ENCODE measurements at regions of chr1 and their contacts with region 1.

Region 1: GRCh38 chr1:172380441-172381244 is 39.8 kb upstream of the C1orf105 start:
- DNase-seq: no peak
- ATAC-seq: peak; percentile 98
- H3K4me3 ChIP-seq: peak overlapping the region; percentile 4; the same call in 1 of the 2 replicates
- H3K27ac ChIP-seq: peak overlapping the region; percentile 93
- H3K4me1 ChIP-seq: peaks cover 20% of the 10 kb centered on the region
- H3K27me3 ChIP-seq: no peaks in the 10 kb centered on the region
- CTCF ChIP-seq: peak in 1 of 3 experiments; percentile 19; a peak in 1 of 6 replicates
- EP300 ChIP-seq: peak; percentile 16 to 83; a peak in 3 of 4 replicates
- POLR2A ChIP-seq: no peak
- RAD21 ChIP-seq: peak; percentile 27; the same call in 1 of the 2 replicates

Region 2: DNA sequence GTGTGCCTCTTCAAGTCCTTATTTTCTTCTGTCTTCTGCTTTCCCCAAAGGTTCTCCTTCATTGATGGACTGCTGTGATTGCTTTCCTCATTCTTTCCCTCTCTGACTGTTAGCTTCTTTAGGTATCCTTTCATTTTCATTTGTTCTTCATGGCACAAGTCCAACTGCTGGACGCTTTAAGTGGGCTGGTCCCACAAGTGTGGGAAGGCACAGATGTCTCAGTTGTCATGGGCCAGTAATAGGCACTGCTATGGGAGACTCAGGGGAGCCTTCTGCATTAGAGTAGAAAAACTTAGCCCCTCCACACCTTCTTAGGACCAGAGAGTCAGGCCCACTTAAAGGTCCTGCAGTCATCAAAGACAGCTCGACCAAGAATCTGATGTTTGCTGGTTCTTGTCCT is 82.5 kb before region 1 on chr1:
- CTCF ChIA-PET with region 1: no interaction called
- POLR2A ChIA-PET with region 1: no interaction called
- RAD21 ChIA-PET with region 1: no interaction called
- SMC1A ChIA-PET with region 1: no interaction called
- in situ Hi-C with region 1: no loop called
- intact Hi-C with region 1: no loop called
- DNase-seq: peak; percentile 31
- ATAC-seq: peak; percentile 66
- H3K4me3 ChIP-seq: no peak overlapping the region
- H3K27ac ChIP-seq: no peak overlapping the region
- H3K4me1 ChIP-seq: no peaks in the 10 kb centered on the region
- H3K27me3 ChIP-seq: no peaks in the 10 kb centered on the region
- CTCF ChIP-seq: no peak
- EP300 ChIP-seq: no peak
- POLR2A ChIP-seq: no peak
- RAD21 ChIP-seq: no peak

Region 3: DNA sequence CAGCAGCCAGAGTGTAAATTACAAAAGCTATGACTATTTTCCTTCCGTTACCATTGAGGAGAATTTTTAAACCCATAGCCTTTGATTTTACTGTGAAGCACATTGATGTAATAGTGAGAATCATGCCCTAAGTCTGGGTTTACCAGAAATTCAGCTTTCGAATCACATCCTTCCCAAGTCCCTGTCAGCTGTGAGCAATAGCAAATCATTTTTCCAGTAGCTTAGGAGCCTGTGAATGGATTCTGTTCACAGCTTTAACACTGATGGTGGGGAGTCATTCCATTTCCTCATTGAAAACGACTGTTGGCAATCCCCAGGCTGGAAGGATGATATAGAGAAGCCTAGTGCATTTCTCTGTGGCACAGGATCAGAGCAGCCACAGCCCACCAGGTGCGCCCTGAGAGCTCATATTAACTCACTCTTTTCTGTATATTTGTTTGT is 42.3 kb before region 1 on chr1:
- CTCF ChIA-PET with region 1: interaction called, 32 read pairs
- POLR2A ChIA-PET with region 1: interaction called, 9 read pairs
- RAD21 ChIA-PET with region 1: interaction called, 52 read pairs
- SMC1A ChIA-PET with region 1: interaction called, 222 read pairs
- in situ Hi-C with region 1: no loop called
- intact Hi-C with region 1: loop called (anchors 1 kb)
- DNase-seq: peak; percentile 74
- ATAC-seq: peak; percentile 74
- H3K4me3 ChIP-seq: peak overlapping the region; percentile 28; the same call in 1 of the 2 replicates
- H3K27ac ChIP-seq: peak overlapping the region; percentile 98
- H3K4me1 ChIP-seq: peaks cover 44% of the 10 kb centered on the region
- H3K27me3 ChIP-seq: no peaks in the 10 kb centered on the region
- CTCF ChIP-seq: no peak
- EP300 ChIP-seq: peak in 1 of 2 experiments; percentile 34; a peak in 1 of 4 replicates
- POLR2A ChIP-seq: no peak
- RAD21 ChIP-seq: no peak

Region 4: GRCh38 chr1:172343240-172344160 is 37.1 kb before region 1 on chr1:
- CTCF ChIA-PET with region 1: interaction called, 32 read pairs
- POLR2A ChIA-PET with region 1: interaction called, 9 read pairs
- RAD21 ChIA-PET with region 1: interaction called, 52 read pairs
- SMC1A ChIA-PET with region 1: interaction called, 222 read pairs
- in situ Hi-C with region 1: no loop called
- intact Hi-C with region 1: loop called (anchors 1 kb)
- DNase-seq: no peak
- ATAC-seq: peak; percentile 37
- H3K4me3 ChIP-seq: no peak overlapping the region
- H3K27ac ChIP-seq: peak overlapping the region; percentile 98
- H3K4me1 ChIP-seq: peaks cover 58% of the 10 kb centered on the region
- H3K27me3 ChIP-seq: no peaks in the 10 kb centered on the region
- CTCF ChIP-seq: no peak
- EP300 ChIP-seq: peak in 1 of 2 experiments; percentile 13; a peak in 1 of 4 replicates
- POLR2A ChIP-seq: no peak
- RAD21 ChIP-seq: no peak

Region 5: GRCh38 chr1:172351761-172352161 is 28.9 kb before region 1 on chr1:
- CTCF ChIA-PET with region 1: interaction called, 3 read pairs
- POLR2A ChIA-PET with region 1: interaction called, 10 read pairs
- RAD21 ChIA-PET with region 1: interaction called, 10 read pairs
- SMC1A ChIA-PET with region 1: interaction called, 336 read pairs
- in situ Hi-C with region 1: no loop called
- intact Hi-C with region 1: no loop called
- DNase-seq: no peak
- ATAC-seq: no peak
- H3K4me3 ChIP-seq: no peak overlapping the region
- H3K27ac ChIP-seq: no peak overlapping the region
- H3K4me1 ChIP-seq: peaks cover 4% of the 10 kb centered on the region
- H3K27me3 ChIP-seq: no peaks in the 10 kb centered on the region
- CTCF ChIP-seq: no peak
- EP300 ChIP-seq: no peak
- POLR2A ChIP-seq: no peak
- RAD21 ChIP-seq: no peak

Region 6: DNA sequence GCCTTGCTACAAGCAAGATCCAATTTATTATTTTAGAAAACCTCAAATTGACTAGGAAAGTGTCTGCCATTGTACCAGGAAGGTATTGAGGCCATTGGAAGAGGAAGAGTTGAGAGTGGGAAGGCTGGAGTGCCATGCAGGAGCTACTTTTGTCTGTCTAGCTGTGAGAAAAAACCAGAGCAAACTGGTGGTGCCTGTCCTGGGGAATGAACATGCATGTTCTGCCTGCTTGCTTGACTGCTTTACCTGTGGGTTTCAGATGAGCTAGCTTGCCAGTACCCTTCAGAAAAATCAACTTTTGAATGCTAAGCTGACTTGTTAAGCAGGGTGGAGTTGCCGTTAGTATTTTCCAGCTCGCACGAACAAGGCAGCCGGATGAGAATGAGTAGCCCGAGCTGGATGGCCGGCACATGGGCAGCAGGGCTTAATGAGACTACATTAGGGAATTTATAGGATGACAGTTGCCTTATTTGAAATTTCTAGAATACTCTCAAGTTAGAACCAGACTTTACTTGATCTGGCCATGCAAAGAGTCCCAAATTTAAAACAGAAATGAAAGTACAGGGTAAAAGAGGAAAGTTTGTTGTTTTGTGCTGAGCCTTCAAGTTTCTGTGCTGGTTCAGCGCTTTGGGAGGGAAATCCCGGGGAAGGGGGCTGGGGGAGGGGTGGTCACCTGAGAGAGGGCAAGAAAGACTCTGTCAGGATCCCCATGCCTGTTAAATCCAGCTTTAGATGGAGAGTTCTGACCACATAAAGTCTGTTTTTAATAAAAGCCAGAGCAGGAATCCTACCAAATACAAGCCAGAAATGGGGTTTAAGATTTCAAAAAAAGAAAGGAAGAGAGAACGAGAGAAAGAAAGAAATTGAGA is 10.3 kb after region 1 on chr1:
- CTCF ChIA-PET with region 1: interaction called, 16 read pairs
- POLR2A ChIA-PET with region 1: interaction called, 41 read pairs
- RAD21 ChIA-PET with region 1: interaction called, 57 read pairs
- SMC1A ChIA-PET with region 1: interaction called, 345 read pairs
- in situ Hi-C with region 1: no loop called
- intact Hi-C with region 1: loop called (anchors 1 kb)
- DNase-seq: peak; percentile 96
- ATAC-seq: peak; percentile 82
- H3K4me3 ChIP-seq: peak overlapping the region; percentile 11; the same call in 1 of the 2 replicates
- H3K27ac ChIP-seq: peak overlapping the region; percentile 98
- H3K4me1 ChIP-seq: peaks cover 56% of the 10 kb centered on the region
- H3K27me3 ChIP-seq: no peaks in the 10 kb centered on the region
- CTCF ChIP-seq: no peak
- EP300 ChIP-seq: no peak
- POLR2A ChIP-seq: peak; percentile 32; the same call in 1 of the 2 replicates
- RAD21 ChIP-seq: peak; percentile 34; the same call in 1 of the 2 replicates

Region 7: GRCh38 chr1:172532700-172533509 is 152.3 kb after region 1 on chr1 and contains the start of gene SUCO:
- CTCF ChIA-PET with region 1: no interaction called
- POLR2A ChIA-PET with region 1: no interaction called
- RAD21 ChIA-PET with region 1: no interaction called
- SMC1A ChIA-PET with region 1: no interaction called
- in situ Hi-C with region 1: no loop called
- intact Hi-C with region 1: no loop called
- DNase-seq: peak; percentile 96
- ATAC-seq: peak; percentile 89
- H3K4me3 ChIP-seq: peak within 1 kb of the TSS; percentile 93
- H3K27ac ChIP-seq: peak within 1 kb of the TSS; percentile 95
- H3K4me1 ChIP-seq: peaks cover 5% of the 10 kb centered on the region; the same call in 1 of the 2 replicates
- H3K27me3 ChIP-seq: no peaks in the 10 kb centered on the region
- CTCF ChIP-seq: no peak
- EP300 ChIP-seq: no peak; a peak in 1 of 4 replicates
- POLR2A ChIP-seq: peak; percentile 97
- RAD21 ChIP-seq: no peak
- polyA plus RNA-seq, gene SUCO: 1.7 to 2.6 TPM